ENCODE measurements at regions of chr1 and their contacts with region 1.

Region 1: GRCh38 chr1:182781841-182782586 is 7.6 kb upstream of the NPL start:
- DNase-seq: peak; percentile 88

Region 2: GRCh38 chr1:181910905-181911304 is 871.1 kb before region 1 on chr1:
- intact Hi-C with region 1: no loop called
- DNase-seq: no peak

Region 3: GRCh38 chr1:182601416-182601786 is 180.6 kb before region 1 on chr1:
- intact Hi-C with region 1: loop called (anchors 2 to 5 kb)
- DNase-seq: no peak

Measured in posterior vena cava (tissue), 2 donors.